SK-N-SH (cell line): ENCODE measurements at regions of chr1 and their contacts with region 1.

Region 1: GRCh38 chr1:88683541-88684481 is at the start of gene PKN2:
- DNase-seq: peak; percentile 97
- H3K4me3 ChIP-seq: peak within 1 kb of the TSS; percentile 95 to 98
- H3K27ac ChIP-seq: peak within 1 kb of the TSS; percentile 90 to 92
- H3K4me1 ChIP-seq: peaks cover 5 to 11% of the 10 kb centered on the region in 2 experiments; a peak in 2 of 4 replicates
- H3K27me3 ChIP-seq: no peaks in the 10 kb centered on the region
- CTCF ChIP-seq: no peak; the same call in 1 of the 2 replicates
- EP300 ChIP-seq: no peak; a peak in 1 of 4 replicates
- RAD21 ChIP-seq: peak; percentile 30; the same call in 1 of the 2 replicates
- polyA plus RNA-seq, gene PKN2: 6.8 and 11.2 TPM in 2 replicates

Region 2: GRCh38 chr1:88618331-88618730 is 65.5 kb before region 1 on chr1:
- CTCF ChIA-PET with region 1: no interaction called
- POLR2A ChIA-PET with region 1: no interaction called
- DNase-seq: no peak
- H3K4me3 ChIP-seq: no peak overlapping the region
- H3K27ac ChIP-seq: no peak overlapping the region
- H3K4me1 ChIP-seq: no peaks in the 10 kb centered on the region
- H3K27me3 ChIP-seq: no peaks in the 10 kb centered on the region
- CTCF ChIP-seq: no peak
- EP300 ChIP-seq: no peak
- RAD21 ChIP-seq: no peak

Region 3: GRCh38 chr1:88655685-88656299 is 28.0 kb before region 1 on chr1:
- CTCF ChIA-PET with region 1: interaction called, 13 read pairs
- POLR2A ChIA-PET with region 1: no interaction called
- DNase-seq: peak; percentile 30
- H3K4me3 ChIP-seq: no peak overlapping the region
- H3K27ac ChIP-seq: no peak overlapping the region
- H3K4me1 ChIP-seq: no peaks in the 10 kb centered on the region; a peak in 1 of 4 replicates
- H3K27me3 ChIP-seq: no peaks in the 10 kb centered on the region
- CTCF ChIP-seq: peak; percentile 80
- EP300 ChIP-seq: no peak
- RAD21 ChIP-seq: peak; percentile 58; the same call in 1 of the 2 replicates

Region 4: DNA sequence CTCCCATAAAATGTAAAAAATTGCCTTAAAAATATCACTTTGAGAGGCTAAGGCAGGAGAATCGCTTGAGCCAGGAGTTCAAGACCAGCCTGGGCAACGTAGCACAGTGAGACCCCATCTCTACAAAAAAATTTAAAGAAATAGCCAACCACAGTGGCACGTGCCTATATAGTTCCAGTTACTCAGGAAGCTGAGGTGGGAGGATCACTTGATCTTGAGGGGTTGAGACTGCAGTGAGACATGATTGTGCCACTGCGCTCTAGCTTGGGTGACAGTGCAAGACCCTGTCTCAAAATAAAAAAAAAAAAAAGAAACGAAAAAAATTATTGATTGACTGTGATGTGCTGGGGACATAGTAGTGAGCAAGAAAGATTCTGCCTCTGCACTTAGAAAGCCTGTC is 38.7 kb after region 1 on chr1:
- CTCF ChIA-PET with region 1: no interaction called
- POLR2A ChIA-PET with region 1: no interaction called
- DNase-seq: no peak
- H3K4me3 ChIP-seq: no peak overlapping the region
- H3K27ac ChIP-seq: no peak overlapping the region
- H3K4me1 ChIP-seq: no peaks in the 10 kb centered on the region; a peak in 1 of 4 replicates
- H3K27me3 ChIP-seq: no peaks in the 10 kb centered on the region
- CTCF ChIP-seq: no peak
- EP300 ChIP-seq: no peak
- RAD21 ChIP-seq: no peak